B cell (primary cell): ENCODE measurements at regions of chr1 and their contacts with region 1.

Region 1: GRCh38 chr1:207868774-207869721 is 41.9 kb downstream of the CD34 start:
- DNase-seq: peak; percentile 90
- ATAC-seq: peak; percentile 74
- H3K4me3 ChIP-seq: peak overlapping the region; percentile 63 to 79 (median 66)
- H3K4me3 Mint-ChIP-seq: peak overlapping the region; percentile 93
- H3K27ac ChIP-seq: peak overlapping the region; percentile 51 to 55
- H3K27ac Mint-ChIP-seq: peak overlapping the region; percentile 77
- H3K4me1 ChIP-seq: peaks cover 59 to 75% of the 10 kb centered on the region in 2 donors
- H3K4me1 Mint-ChIP-seq: peaks cover 87% of the 10 kb centered on the region
- H3K27me3 ChIP-seq: no peaks in the 10 kb centered on the region
- H3K27me3 Mint-ChIP-seq: no peaks in the 10 kb centered on the region
- CTCF ChIP-seq: peak; percentile 77

Region 2: GRCh38 chr1:207797229-207797961 is 71.7 kb before region 1 on chr1:
- CTCF ChIA-PET with region 1: interaction called, 167 read pairs
- POLR2A ChIA-PET with region 1: interaction called, 10 read pairs
- intact Hi-C with region 1: loop called (anchors 1 kb)
- DNase-seq: peak; percentile 75
- ATAC-seq: peak; percentile 80
- H3K4me3 ChIP-seq: no peak overlapping the region
- H3K4me3 Mint-ChIP-seq: no peak overlapping the region
- H3K27ac ChIP-seq: no peak overlapping the region
- H3K27ac Mint-ChIP-seq: no peak overlapping the region
- H3K4me1 ChIP-seq: peaks cover 16 to 22% of the 10 kb centered on the region in 2 donors
- H3K4me1 Mint-ChIP-seq: peaks cover 33% of the 10 kb centered on the region
- H3K27me3 ChIP-seq: no peaks in the 10 kb centered on the region
- H3K27me3 Mint-ChIP-seq: no peaks in the 10 kb centered on the region
- CTCF ChIP-seq: peak; percentile 83

Region 3: GRCh38 chr1:207811920-207812720 is 56.9 kb before region 1 on chr1:
- CTCF ChIA-PET with region 1: interaction called, 526 read pairs
- POLR2A ChIA-PET with region 1: interaction called, 5 read pairs
- intact Hi-C with region 1: no loop called
- DNase-seq: peak; percentile 31
- ATAC-seq: no peak
- H3K4me3 ChIP-seq: no peak overlapping the region
- H3K4me3 Mint-ChIP-seq: no peak overlapping the region
- H3K27ac ChIP-seq: peak overlapping the region in 1 of 2 donors; percentile 25
- H3K27ac Mint-ChIP-seq: peak overlapping the region; percentile 72
- H3K4me1 ChIP-seq: peaks cover 34 to 46% of the 10 kb centered on the region in 2 donors
- H3K4me1 Mint-ChIP-seq: peaks cover 88% of the 10 kb centered on the region
- H3K27me3 ChIP-seq: no peaks in the 10 kb centered on the region
- H3K27me3 Mint-ChIP-seq: no peaks in the 10 kb centered on the region
- CTCF ChIP-seq: no peak

Region 4: GRCh38 chr1:207838156-207839082 is 30.6 kb before region 1 on chr1:
- CTCF ChIA-PET with region 1: interaction called, 526 read pairs
- POLR2A ChIA-PET with region 1: interaction called, 3 read pairs
- intact Hi-C with region 1: no loop called
- DNase-seq: no peak
- ATAC-seq: no peak
- H3K4me3 ChIP-seq: no peak overlapping the region
- H3K4me3 Mint-ChIP-seq: no peak overlapping the region
- H3K27ac ChIP-seq: no peak overlapping the region
- H3K27ac Mint-ChIP-seq: no peak overlapping the region
- H3K4me1 ChIP-seq: peaks cover 7 to 10% of the 10 kb centered on the region in 2 donors
- H3K4me1 Mint-ChIP-seq: peaks cover 55% of the 10 kb centered on the region
- H3K27me3 ChIP-seq: no peaks in the 10 kb centered on the region
- H3K27me3 Mint-ChIP-seq: no peaks in the 10 kb centered on the region
- CTCF ChIP-seq: no peak

Region 5: GRCh38 chr1:207910591-207911354 is 41.7 kb after region 1 on chr1 and contains the start of gene CD34:
- CTCF ChIA-PET with region 1: no interaction called
- POLR2A ChIA-PET with region 1: no interaction called
- intact Hi-C with region 1: no loop called
- DNase-seq: no peak
- ATAC-seq: no peak
- H3K4me3 ChIP-seq: peak within 1 kb of the TSS in 1 of 5 experiments; percentile 9
- H3K4me3 Mint-ChIP-seq: peak within 1 kb of the TSS; percentile 35
- H3K27ac ChIP-seq: no peak within 1 kb of the TSS
- H3K27ac Mint-ChIP-seq: no peak within 1 kb of the TSS
- H3K4me1 ChIP-seq: peaks cover 10 to 11% of the 10 kb centered on the region in 2 donors
- H3K4me1 Mint-ChIP-seq: peaks cover 11% of the 10 kb centered on the region
- H3K27me3 ChIP-seq: peaks cover 0 to 32% (median 24%) of the 10 kb centered on the region in 4 experiments
- H3K27me3 Mint-ChIP-seq: peaks cover 60% of the 10 kb centered on the region
- CTCF ChIP-seq: no peak
- total RNA-seq, gene CD34: 0.05 TPM in 1 of 2 replicates, not detected in the other

Region 6: DNA sequence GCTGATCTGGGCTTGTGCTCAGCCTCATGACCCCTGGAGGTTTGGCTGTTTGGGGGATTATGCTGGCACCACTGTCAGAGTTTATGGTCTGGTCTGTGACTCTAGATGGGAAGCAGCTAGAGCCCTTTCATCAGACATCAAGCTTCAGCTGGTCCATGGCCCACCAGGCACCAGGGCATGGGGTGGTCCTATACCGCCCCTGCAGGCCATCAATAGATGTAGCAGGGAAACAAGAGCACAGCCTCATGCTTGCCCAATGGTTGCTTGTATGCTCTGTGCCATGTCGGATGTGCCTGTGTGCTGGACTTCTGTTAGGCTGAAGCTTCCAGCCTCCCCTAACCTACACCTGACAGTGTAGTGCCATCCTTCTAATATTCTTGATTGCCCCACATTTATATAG is 112.9 kb after region 1 on chr1:
- CTCF ChIA-PET with region 1: no interaction called
- POLR2A ChIA-PET with region 1: no interaction called
- intact Hi-C with region 1: no loop called
- DNase-seq: no peak
- ATAC-seq: peak; percentile 39
- H3K4me3 ChIP-seq: no peak overlapping the region
- H3K4me3 Mint-ChIP-seq: no peak overlapping the region
- H3K27ac ChIP-seq: no peak overlapping the region
- H3K27ac Mint-ChIP-seq: no peak overlapping the region
- H3K4me1 ChIP-seq: no peaks in the 10 kb centered on the region
- H3K4me1 Mint-ChIP-seq: no peaks in the 10 kb centered on the region
- H3K27me3 ChIP-seq: peaks cover 0 to 5% (median 0%) of the 10 kb centered on the region in 4 experiments
- H3K27me3 Mint-ChIP-seq: peaks cover 17% of the 10 kb centered on the region
- CTCF ChIP-seq: peak; percentile 28